ENCODE measurements at regions of chr7 and their contacts with region 1.

Region 1: DNA sequence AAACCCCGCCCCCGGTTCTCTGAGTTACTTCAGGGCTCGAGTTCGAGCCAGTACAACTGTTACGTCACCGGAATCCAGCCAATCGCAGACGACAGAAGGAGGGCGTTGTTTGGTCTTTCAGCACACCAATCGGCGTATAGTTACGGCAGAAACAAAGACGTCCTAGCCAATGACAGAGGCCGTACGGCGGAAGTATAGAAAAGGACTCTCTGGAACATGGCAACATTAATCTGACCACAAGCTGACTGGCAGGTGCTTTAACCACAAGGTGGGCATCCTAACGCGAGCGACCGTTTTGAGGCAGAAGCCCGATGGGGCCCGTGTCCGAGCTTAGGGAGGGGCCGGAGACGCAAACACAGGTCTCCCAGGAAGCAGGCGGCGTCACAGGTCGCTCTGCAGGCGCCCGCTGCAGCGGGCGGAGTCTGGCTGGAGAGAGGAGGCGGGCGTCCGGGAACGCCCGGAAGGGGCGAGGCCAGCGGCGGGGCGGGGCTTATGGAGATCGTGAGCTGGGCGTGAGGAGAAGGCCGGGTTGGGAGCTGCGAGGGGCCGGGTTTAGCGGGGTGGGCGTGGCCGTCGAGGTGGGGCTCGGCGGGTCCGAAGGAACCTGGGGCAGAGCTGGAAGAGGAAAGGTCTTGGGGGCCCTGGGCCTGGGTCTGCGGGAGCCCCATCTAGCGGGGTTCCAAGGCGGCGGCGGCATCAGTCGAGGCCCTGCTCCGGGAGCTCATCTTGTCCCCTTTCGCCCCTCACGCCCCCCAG is at the start of gene MOSPD3:
- DNase-seq: peak; percentile 98
- H3K4me3 Mint-ChIP-seq: peak within 1 kb of the TSS; percentile 97
- H3K27ac Mint-ChIP-seq: peak within 1 kb of the TSS; percentile 99
- H3K4me1 Mint-ChIP-seq: peaks cover 10% of the 10 kb centered on the region
- H3K27me3 Mint-ChIP-seq: no peaks in the 10 kb centered on the region
- total RNA-seq, gene MOSPD3: 14.1 TPM in 2 replicates

Region 2: DNA sequence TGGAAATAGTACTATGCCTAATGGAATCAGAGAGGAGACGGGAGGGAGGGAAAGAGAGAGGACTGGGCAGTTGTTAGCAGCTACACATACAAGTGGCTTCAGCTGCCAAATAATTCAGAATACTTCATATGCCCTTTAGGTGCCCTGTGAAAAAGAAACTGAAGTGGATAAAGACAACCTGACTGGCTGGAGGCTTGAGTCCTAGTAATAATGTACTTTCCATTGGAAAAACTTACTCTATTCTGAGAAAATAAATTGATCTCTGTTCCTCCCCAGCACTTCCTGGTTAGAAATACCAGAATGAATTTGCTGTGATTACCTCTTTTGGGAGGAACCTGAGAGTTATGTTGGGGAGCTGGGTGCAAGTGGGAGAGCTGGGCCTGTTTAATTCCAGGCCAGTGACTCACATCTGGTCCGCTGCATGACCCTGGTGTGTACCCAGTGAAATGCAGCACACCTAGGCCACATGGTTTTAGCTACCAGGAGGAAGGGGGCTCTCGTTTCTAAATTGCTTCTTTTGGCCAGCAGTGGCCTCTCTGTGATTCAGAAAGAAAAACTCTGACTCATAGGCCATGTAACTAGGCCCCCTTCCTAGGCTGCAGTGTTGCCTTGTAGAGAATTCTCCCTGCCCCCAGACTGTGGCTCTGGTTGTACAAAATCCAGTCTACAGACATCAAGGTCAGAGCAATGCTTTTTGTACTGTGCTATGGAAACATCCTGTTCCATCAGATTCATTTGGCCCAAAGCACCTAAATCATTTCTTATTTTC is 66.6 kb before region 1 on chr7:
- intact Hi-C with region 1: loop called (anchors 2 kb)
- DNase-seq: peak; percentile 36
- H3K4me3 Mint-ChIP-seq: peak overlapping the region; percentile 76
- H3K27ac Mint-ChIP-seq: peak overlapping the region; percentile 99
- H3K4me1 Mint-ChIP-seq: peaks cover 85% of the 10 kb centered on the region
- H3K27me3 Mint-ChIP-seq: no peaks in the 10 kb centered on the region

Region 3: GRCh38 chr7:100626530-100627237 is 14.5 kb after region 1 on chr7:
- intact Hi-C with region 1: loop called (anchors 2 kb)
- DNase-seq: peak; percentile 83
- H3K4me3 Mint-ChIP-seq: peak overlapping the region; percentile 74
- H3K27ac Mint-ChIP-seq: peak overlapping the region; percentile 42
- H3K4me1 Mint-ChIP-seq: peaks cover 35% of the 10 kb centered on the region
- H3K27me3 Mint-ChIP-seq: no peaks in the 10 kb centered on the region